ENCODE measurements at regions of chr6 and their contacts with region 1.

Region 1: DNA sequence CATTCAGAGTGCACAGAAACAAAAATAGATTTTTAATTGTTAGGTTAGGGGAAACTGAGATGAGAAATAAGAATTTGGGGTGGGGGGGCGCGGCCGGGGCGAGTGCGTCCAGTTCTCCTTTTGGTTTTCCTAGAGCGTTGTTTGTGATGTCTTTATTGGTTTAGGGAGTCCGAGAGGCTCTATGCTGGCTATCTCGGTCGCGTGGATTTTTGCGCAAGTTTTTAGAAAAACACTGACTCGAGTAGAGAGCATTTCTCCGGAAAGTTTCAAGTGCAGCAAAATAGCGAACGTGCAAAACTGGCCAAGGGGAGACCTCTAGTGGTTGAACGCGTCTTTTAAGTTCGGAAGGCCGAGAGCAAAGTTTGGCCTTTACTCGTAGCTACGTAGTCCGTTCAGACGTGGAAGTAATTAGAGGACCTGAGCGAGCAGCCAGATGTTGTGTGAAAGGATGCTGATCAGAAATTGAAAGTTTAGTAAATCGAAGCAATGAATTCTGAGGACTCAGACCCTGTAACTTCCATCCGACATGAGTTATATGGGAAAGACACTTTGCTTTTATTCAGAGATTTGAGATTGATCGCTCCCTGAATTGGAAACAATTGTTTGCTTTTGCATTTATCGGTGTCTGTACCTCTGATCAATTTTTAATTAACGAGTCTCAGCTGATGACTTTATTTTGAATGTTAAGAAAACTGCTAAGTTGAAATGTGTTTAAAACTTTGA is 2.7 kb downstream of the L3MBTL3 start:
- DNase-seq: peak; percentile 87
- H3K4me3 ChIP-seq: peak overlapping the region; percentile 62 to 92 (median 83)
- H3K27ac ChIP-seq: peak overlapping the region; percentile 85 to 90 (median 88)
- H3K4me1 ChIP-seq: peaks cover 0 to 9% (median 3%) of the 10 kb centered on the region in 4 donors
- H3K27me3 ChIP-seq: no peaks in the 10 kb centered on the region
- CTCF ChIP-seq: peak; percentile 71 to 84 (median 76)
- EP300 ChIP-seq: no peak
- POLR2A ChIP-seq: peak; percentile 17

Region 2: GRCh38 chr6:129141499-129141898 is 879.6 kb before region 1 on chr6:
- in situ Hi-C with region 1: no loop called
- intact Hi-C with region 1: no loop called
- DNase-seq: no peak
- H3K4me3 ChIP-seq: no peak overlapping the region
- H3K27ac ChIP-seq: peak overlapping the region in 2 of 4 donors; percentile 46 to 53
- H3K4me1 ChIP-seq: no peaks in the 10 kb centered on the region
- H3K27me3 ChIP-seq: no peaks in the 10 kb centered on the region
- CTCF ChIP-seq: no peak
- EP300 ChIP-seq: no peak
- POLR2A ChIP-seq: no peak

Region 3: DNA sequence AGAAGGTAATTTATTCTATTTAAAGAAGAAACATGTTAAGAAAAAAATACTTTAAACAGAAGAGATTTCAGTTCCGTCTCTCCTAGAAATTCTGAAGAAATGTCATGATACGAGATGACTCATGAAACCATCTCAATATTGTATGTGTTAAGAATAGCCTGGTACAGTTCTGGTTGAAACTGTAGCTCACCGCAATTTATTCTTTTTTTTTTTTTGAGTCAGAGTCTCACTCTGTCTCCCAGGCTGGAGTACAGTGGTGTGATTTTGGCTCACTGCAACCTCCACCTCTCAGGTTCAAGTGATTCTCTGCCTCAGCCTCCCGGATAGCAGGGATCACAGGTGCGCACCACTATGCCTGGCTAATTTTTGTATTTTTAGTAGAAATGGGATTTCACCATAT is 414.4 kb before region 1 on chr6:
- in situ Hi-C with region 1: loop called in 1 of 4 experiments (anchors 25 kb)
- intact Hi-C with region 1: loop called (anchors 10 kb)
- DNase-seq: no peak
- H3K4me3 ChIP-seq: no peak overlapping the region
- H3K27ac ChIP-seq: no peak overlapping the region
- H3K4me1 ChIP-seq: peaks cover 0 to 12% (median 5%) of the 10 kb centered on the region in 4 donors
- H3K27me3 ChIP-seq: no peaks in the 10 kb centered on the region
- CTCF ChIP-seq: no peak
- EP300 ChIP-seq: no peak
- POLR2A ChIP-seq: no peak

Region 4: DNA sequence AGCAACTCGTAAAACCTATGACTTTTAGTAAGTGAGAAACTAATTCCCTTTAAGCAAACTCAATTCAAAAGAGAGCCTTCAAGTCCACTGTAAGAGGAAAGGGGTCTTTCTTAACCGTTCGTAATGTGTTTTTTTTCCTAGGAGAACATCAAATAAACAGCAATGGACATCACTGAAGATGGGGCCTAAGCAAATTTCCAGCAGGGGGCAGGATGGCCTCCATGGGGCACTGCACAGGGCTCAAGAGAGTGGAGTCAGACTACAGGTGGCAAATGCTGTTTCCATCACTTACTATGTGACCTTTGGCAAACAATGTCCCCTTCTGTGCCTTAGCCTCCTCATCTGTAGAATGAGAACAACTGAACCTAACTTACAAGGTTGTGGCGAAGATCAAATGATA is 399.8 kb before region 1 on chr6:
- in situ Hi-C with region 1: loop called in 1 of 4 experiments (anchors 25 kb)
- intact Hi-C with region 1: no loop called
- DNase-seq: peak; percentile 24
- H3K4me3 ChIP-seq: no peak overlapping the region
- H3K27ac ChIP-seq: no peak overlapping the region
- H3K4me1 ChIP-seq: no peaks in the 10 kb centered on the region
- H3K27me3 ChIP-seq: no peaks in the 10 kb centered on the region
- CTCF ChIP-seq: peak in 4 of 5 experiments; percentile 16 to 29 (median 24)
- EP300 ChIP-seq: no peak
- POLR2A ChIP-seq: no peak

Measured in transverse colon (tissue), 4 donors.